Endothelial cell of umbilical vein (primary cell): ENCODE measurements at regions of chr17 and their contacts with region 1.

Region 1: GRCh38 chr17:56809106-56809505 is 24.6 kb downstream of the C17orf67 start:
- DNase-seq: no peak
- H3K4me3 ChIP-seq: no peak overlapping the region
- H3K27ac ChIP-seq: no peak overlapping the region
- H3K4me1 ChIP-seq: no peaks in the 10 kb centered on the region
- H3K27me3 ChIP-seq: no peaks in the 10 kb centered on the region
- CTCF ChIP-seq: no peak
- POLR2A ChIP-seq: no peak

Region 2: GRCh38 chr17:56845934-56846333 is 36.8 kb after region 1 on chr17:
- CTCF ChIA-PET with region 1: no interaction called
- POLR2A ChIA-PET with region 1: no interaction called
- dilution Hi-C with region 1: no loop called
- intact Hi-C with region 1: loop called (anchors 1 kb)
- DNase-seq: no peak
- H3K4me3 ChIP-seq: no peak overlapping the region
- H3K27ac ChIP-seq: no peak overlapping the region
- H3K4me1 ChIP-seq: no peaks in the 10 kb centered on the region
- H3K27me3 ChIP-seq: no peaks in the 10 kb centered on the region
- CTCF ChIP-seq: no peak
- POLR2A ChIP-seq: no peak